CD4-positive, alpha-beta T cell (primary cell): ENCODE measurements at regions of chr7 and their contacts with region 1.

Region 1: DNA sequence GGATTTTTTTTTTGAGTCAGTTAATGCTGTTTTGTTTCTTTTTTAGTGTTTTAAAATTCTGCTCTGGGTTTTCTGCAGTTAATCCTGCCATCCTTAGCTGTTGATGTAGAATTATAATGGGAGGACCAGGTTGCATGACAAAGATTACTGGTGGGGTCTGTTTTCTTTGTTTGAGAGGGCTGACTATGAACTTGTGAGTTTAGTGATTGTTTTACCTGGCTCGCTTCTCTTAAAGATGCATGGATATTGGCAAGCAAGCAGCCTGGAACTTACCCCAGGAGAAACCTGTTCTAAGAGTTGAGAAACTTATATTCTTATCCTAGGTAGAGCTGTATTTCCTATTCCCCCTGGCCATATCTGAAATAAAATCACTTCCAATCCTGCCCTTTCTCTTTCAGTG is 727.8 kb downstream of the GRM8 start:
- DNase-seq: no peak
- ATAC-seq: no peak
- H3K4me3 ChIP-seq: no peak overlapping the region
- H3K4me3 Mint-ChIP-seq: no peak overlapping the region
- H3K27ac ChIP-seq: no peak overlapping the region
- H3K27ac Mint-ChIP-seq: no peak overlapping the region
- H3K4me1 ChIP-seq: no peaks in the 10 kb centered on the region
- H3K4me1 Mint-ChIP-seq: no peaks in the 10 kb centered on the region
- H3K27me3 ChIP-seq: no peaks in the 10 kb centered on the region
- H3K27me3 Mint-ChIP-seq: no peaks in the 10 kb centered on the region
- CTCF ChIP-seq: no peak

Region 2: GRCh38 chr7:126511046-126511445 is 13.9 kb before region 1 on chr7:
- CTCF ChIA-PET with region 1: no interaction called
- POLR2A ChIA-PET with region 1: no interaction called
- intact Hi-C with region 1: loop called in 1 of 2 experiments (anchors 1 kb)
- DNase-seq: no peak
- ATAC-seq: no peak
- H3K4me3 ChIP-seq: no peak overlapping the region
- H3K4me3 Mint-ChIP-seq: no peak overlapping the region
- H3K27ac ChIP-seq: no peak overlapping the region
- H3K27ac Mint-ChIP-seq: no peak overlapping the region
- H3K4me1 ChIP-seq: no peaks in the 10 kb centered on the region
- H3K4me1 Mint-ChIP-seq: no peaks in the 10 kb centered on the region
- H3K27me3 ChIP-seq: no peaks in the 10 kb centered on the region
- H3K27me3 Mint-ChIP-seq: no peaks in the 10 kb centered on the region
- CTCF ChIP-seq: no peak